SK-N-SH (cell line): ENCODE measurements at regions of chr14 and their contacts with region 1.

Region 1: DNA sequence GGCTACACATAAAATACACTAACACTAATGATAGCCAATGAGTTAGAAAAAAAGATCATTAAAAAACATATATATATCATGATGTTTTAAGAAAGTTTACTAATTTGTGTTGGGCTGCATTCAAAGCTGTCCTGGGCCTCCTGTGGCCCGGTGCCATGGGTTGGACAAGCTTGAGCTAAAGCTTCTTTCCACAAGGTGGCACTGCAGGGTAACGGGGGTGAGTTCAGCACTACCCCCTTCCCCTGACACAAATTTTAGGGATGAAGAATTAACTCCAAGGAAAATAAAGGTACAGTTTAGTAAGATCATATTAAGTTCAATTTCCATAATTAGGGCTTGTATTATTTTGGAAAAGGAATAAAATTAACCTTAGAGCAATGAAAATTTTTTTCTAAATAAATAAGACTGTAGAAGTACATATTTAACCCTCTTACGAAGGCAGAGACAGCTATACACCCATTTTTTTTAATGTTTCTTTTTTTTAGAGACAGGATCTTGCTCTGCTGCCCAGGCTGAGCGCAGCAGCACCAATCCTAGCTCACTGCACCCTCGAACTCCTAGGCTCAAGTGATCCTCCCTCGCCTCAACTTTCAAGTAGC is 38.9 kb downstream of the PPP1R13B start:
- DNase-seq: peak; percentile 80
- H3K4me3 ChIP-seq: no peak overlapping the region
- H3K27ac ChIP-seq: no peak overlapping the region
- H3K4me1 ChIP-seq: peaks cover 0 to 4% of the 10 kb centered on the region in 2 experiments; a peak in 1 of 4 replicates
- H3K27me3 ChIP-seq: no peaks in the 10 kb centered on the region
- CTCF ChIP-seq: peak; percentile 94
- EP300 ChIP-seq: no peak
- RAD21 ChIP-seq: peak; percentile 93

Region 2: DNA sequence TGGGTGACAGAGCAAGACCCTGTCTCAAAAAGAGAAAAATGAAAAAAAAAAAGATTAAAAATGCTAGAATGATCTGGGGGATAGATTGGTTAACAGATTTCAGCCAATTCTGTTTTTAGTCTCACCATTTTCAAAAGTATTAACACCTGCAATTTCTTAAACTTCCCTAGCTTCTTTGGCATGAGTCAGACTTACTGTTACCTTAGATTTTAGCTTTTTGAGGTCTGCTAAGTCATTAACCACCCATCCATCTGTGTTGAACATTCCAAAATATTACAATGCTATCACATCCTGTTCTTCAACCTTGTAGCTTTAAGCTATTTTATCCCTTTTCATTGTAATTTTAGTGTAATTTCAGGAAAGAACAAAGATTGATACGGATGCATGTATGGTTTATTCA is 20.4 kb before region 1 on chr14:
- CTCF ChIA-PET with region 1: interaction called, 45 read pairs
- POLR2A ChIA-PET with region 1: no interaction called
- DNase-seq: no peak
- H3K4me3 ChIP-seq: no peak overlapping the region
- H3K27ac ChIP-seq: no peak overlapping the region
- H3K4me1 ChIP-seq: no peaks in the 10 kb centered on the region
- H3K27me3 ChIP-seq: no peaks in the 10 kb centered on the region
- CTCF ChIP-seq: no peak
- EP300 ChIP-seq: no peak
- RAD21 ChIP-seq: no peak

Region 3: GRCh38 chr14:103819503-103820307 is 11.2 kb after region 1 on chr14:
- CTCF ChIA-PET with region 1: interaction called, 23 read pairs
- POLR2A ChIA-PET with region 1: no interaction called
- DNase-seq: peak; percentile 24
- H3K4me3 ChIP-seq: no peak overlapping the region
- H3K27ac ChIP-seq: no peak overlapping the region
- H3K4me1 ChIP-seq: peaks cover 5 to 14% of the 10 kb centered on the region in 2 experiments; a peak in 2 of 4 replicates
- H3K27me3 ChIP-seq: no peaks in the 10 kb centered on the region
- CTCF ChIP-seq: no peak
- EP300 ChIP-seq: no peak
- RAD21 ChIP-seq: no peak

Region 4: GRCh38 chr14:103880348-103881267 is 72.1 kb after region 1 on chr14:
- CTCF ChIA-PET with region 1: interaction called, 15 read pairs
- POLR2A ChIA-PET with region 1: interaction called, 3 read pairs
- DNase-seq: peak; percentile 62
- H3K4me3 ChIP-seq: no peak overlapping the region
- H3K27ac ChIP-seq: peak overlapping the region in 1 of 2 experiments; percentile 24; a peak in 1 of 4 replicates
- H3K4me1 ChIP-seq: peaks cover 0 to 38% of the 10 kb centered on the region in 2 experiments; a peak in 1 of 4 replicates
- H3K27me3 ChIP-seq: no peaks in the 10 kb centered on the region
- CTCF ChIP-seq: no peak
- EP300 ChIP-seq: no peak
- RAD21 ChIP-seq: no peak

Region 5: DNA sequence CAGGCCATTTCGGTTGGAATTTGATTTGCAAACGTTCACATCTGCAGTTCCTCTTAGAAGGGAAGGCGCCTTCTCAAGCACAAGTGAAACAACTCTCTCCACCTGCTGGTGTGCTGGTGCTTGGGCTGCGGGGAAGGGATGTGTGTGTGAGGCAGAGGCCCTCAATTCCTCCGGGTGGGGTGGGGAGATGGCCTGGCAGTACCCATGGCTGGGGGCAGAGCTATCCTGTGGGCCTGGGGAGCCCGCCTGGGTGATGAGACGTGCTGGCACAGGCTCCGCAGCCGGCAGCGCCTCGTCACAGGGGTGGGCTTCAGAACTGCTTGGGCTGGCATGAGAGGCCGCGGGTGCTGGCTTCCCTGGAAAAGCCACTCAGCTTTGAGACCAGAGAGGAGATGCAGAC is 90.8 kb after region 1 on chr14:
- CTCF ChIA-PET with region 1: interaction called, 19 read pairs
- POLR2A ChIA-PET with region 1: no interaction called
- DNase-seq: peak; percentile 32
- H3K4me3 ChIP-seq: no peak overlapping the region
- H3K27ac ChIP-seq: no peak overlapping the region
- H3K4me1 ChIP-seq: peaks cover 0 to 5% of the 10 kb centered on the region in 2 experiments; a peak in 1 of 4 replicates
- H3K27me3 ChIP-seq: no peaks in the 10 kb centered on the region
- CTCF ChIP-seq: no peak
- EP300 ChIP-seq: no peak
- RAD21 ChIP-seq: no peak

Region 6: GRCh38 chr14:103904493-103905107 is 96.1 kb after region 1 on chr14:
- CTCF ChIA-PET with region 1: interaction called, 197 read pairs
- POLR2A ChIA-PET with region 1: interaction called, 3 read pairs
- DNase-seq: peak; percentile 80
- H3K4me3 ChIP-seq: no peak overlapping the region
- H3K27ac ChIP-seq: peak overlapping the region in 1 of 2 experiments; percentile 64; a peak in 2 of 4 replicates
- H3K4me1 ChIP-seq: peaks cover 0 to 17% of the 10 kb centered on the region in 2 experiments; a peak in 1 of 4 replicates
- H3K27me3 ChIP-seq: no peaks in the 10 kb centered on the region
- CTCF ChIP-seq: no peak
- EP300 ChIP-seq: peak in 1 of 2 experiments; percentile 76; a peak in 2 of 4 replicates
- RAD21 ChIP-seq: no peak; the same call in 1 of the 2 replicates

Region 7: DNA sequence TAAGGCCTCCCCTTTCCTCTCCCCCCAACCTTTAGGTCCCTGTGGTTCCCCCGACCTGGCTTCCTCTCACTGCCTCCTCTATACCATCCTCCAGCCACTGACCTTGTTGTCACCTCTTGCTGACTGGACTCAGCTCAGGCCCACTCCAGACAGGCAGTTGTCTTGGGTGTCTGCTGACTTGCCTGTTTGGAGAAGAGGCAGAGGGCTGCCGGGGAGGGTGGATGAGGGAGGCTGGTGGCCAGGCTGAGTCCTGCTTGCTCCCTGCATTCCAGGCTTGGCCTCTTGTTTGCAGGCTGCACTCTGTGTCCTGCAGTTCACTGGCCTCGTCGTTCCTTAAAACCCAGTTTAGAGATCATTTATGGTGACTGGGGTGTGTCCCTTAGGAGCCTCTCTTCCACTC is 164.9 kb after region 1 on chr14:
- CTCF ChIA-PET with region 1: interaction called, 28 read pairs
- POLR2A ChIA-PET with region 1: no interaction called
- DNase-seq: no peak
- H3K4me3 ChIP-seq: no peak overlapping the region
- H3K27ac ChIP-seq: no peak overlapping the region
- H3K4me1 ChIP-seq: peaks cover 0 to 4% of the 10 kb centered on the region in 2 experiments; a peak in 1 of 4 replicates
- H3K27me3 ChIP-seq: no peaks in the 10 kb centered on the region
- CTCF ChIP-seq: no peak
- EP300 ChIP-seq: no peak
- RAD21 ChIP-seq: no peak

Region 8: GRCh38 chr14:104210041-104210816 is 401.7 kb after region 1 on chr14:
- CTCF ChIA-PET with region 1: no interaction called
- POLR2A ChIA-PET with region 1: no interaction called
- DNase-seq: no peak
- H3K4me3 ChIP-seq: no peak overlapping the region
- H3K27ac ChIP-seq: no peak overlapping the region
- H3K4me1 ChIP-seq: peaks cover 0 to 32% of the 10 kb centered on the region in 2 experiments; a peak in 1 of 4 replicates
- H3K27me3 ChIP-seq: no peaks in the 10 kb centered on the region
- CTCF ChIP-seq: no peak
- EP300 ChIP-seq: no peak
- RAD21 ChIP-seq: no peak